AG04449 (cell line): ENCODE measurements at regions of chr1 and their contacts with region 1.

Region 1: GRCh38 chr1:205141236-205142101 is 19.7 kb upstream of the RBBP5 start:
- DNase-seq: peak; percentile 45
- H3K4me3 ChIP-seq: no peak overlapping the region
- CTCF ChIP-seq: peak; percentile 64

Region 2: DNA sequence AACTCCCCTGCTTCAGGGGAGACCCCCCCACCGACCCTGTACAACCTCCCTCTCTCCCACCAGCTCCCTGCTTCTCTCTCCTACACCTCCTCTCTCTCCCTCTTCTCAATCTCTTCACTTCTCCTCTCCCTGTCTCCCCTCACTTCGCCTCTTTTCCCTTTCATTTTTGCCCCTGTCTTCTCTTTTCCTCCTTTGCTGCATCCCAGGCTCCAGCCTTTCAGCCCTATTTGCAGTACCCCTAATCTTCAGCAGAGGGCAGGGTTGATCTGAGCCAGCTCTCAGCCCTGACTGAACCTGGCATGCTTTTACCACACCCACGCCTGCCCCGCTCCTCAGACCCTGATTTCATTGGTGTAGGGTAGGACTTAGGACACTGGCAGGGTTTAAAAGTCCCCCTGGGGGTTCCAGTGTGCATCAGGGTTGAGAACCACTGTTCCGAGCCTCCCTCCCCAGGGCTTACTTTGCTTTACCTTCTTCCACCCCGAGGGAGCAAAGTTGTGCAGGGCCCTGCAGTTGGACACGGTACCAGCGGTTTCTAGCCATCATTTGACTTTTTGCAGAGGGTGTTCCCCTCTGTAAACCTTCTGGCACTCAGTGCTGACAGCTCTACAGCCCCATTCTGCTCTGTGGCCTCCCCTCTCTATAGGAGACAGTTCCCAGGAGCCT is 165.8 kb before region 1 on chr1:
- CTCF ChIA-PET with region 1: interaction called, 15 read pairs
- POLR2A ChIA-PET with region 1: no interaction called
- DNase-seq: no peak
- H3K4me3 ChIP-seq: no peak overlapping the region
- CTCF ChIP-seq: peak; percentile 79

Region 3: DNA sequence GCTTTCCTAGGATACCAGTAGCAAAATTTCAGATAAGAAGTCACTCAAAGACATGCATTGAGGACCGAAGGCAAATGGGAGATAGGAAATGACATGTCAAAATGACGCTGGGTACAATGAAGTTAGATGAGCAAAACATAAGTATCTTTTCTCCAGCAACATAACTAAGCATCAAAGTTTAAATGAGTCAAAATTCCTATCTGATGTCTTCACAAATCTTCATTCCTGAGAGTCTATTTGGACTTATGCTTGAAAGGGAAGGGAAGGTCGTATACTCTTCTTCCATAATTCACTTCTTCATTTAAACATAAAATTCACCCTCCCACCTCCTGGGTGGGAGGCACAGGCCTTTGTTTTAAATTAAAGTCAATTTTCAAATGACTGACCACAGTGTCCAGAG is 53.1 kb before region 1 on chr1:
- CTCF ChIA-PET with region 1: interaction called, 13 read pairs
- POLR2A ChIA-PET with region 1: no interaction called
- DNase-seq: no peak
- H3K4me3 ChIP-seq: no peak overlapping the region
- CTCF ChIP-seq: no peak

Region 4: DNA sequence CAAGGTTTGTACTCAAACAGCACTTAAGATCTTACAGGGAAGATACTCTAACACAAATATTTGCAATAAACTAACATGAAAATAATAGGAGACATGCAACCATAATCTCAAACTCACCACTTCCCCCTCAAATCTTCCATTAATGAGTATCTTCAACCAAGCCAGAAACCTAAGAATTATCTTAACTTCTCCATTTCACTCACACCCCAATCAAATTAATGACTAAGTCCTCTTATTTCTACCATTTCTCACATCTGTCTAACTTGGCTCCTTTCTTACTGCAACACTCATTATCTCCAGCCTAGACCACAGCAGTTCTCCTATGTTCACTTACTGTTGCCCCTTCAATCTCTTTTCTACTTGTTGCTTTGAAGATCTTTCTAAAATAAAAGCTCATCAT is 30.1 kb before region 1 on chr1:
- CTCF ChIA-PET with region 1: interaction called, 20 read pairs
- POLR2A ChIA-PET with region 1: no interaction called
- DNase-seq: no peak
- H3K4me3 ChIP-seq: no peak overlapping the region
- CTCF ChIP-seq: no peak

Region 5: GRCh38 chr1:205162301-205162700 is 20.8 kb after region 1 on chr1:
- CTCF ChIA-PET with region 1: interaction called, 18 read pairs
- POLR2A ChIA-PET with region 1: no interaction called
- DNase-seq: no peak
- H3K4me3 ChIP-seq: no peak overlapping the region
- CTCF ChIP-seq: no peak

Region 6: GRCh38 chr1:205227584-205228006 is 86.1 kb after region 1 on chr1 and contains the start of gene TMCC2:
- CTCF ChIA-PET with region 1: interaction called, 11 read pairs
- POLR2A ChIA-PET with region 1: no interaction called
- DNase-seq: no peak
- H3K4me3 ChIP-seq: peak within 1 kb of the TSS; percentile 73
- CTCF ChIP-seq: no peak